T-cell (primary cell): ENCODE measurements at regions of chr9 and their contacts with region 1.

Region 1: GRCh38 chr9:5450359-5451091 is at the start of gene CD274:
- DNase-seq: peak; percentile 50 to 87 (median 68)
- ATAC-seq: peak; percentile 94 to 97 (median 95)
- H3K4me3 ChIP-seq: peak within 1 kb of the TSS; percentile 71 to 85
- H3K4me3 Mint-ChIP-seq: peak within 1 kb of the TSS; percentile 91 to 96 (median 93)
- H3K27ac ChIP-seq: peak within 1 kb of the TSS; percentile 98
- H3K27ac Mint-ChIP-seq: peak within 1 kb of the TSS; percentile 91 to 99
- H3K4me1 ChIP-seq: peaks cover 4 to 23% of the 10 kb centered on the region in 2 experiments
- H3K4me1 Mint-ChIP-seq: peaks cover 68 to 77% (median 68%) of the 10 kb centered on the region in 3 donors
- H3K27me3 ChIP-seq: no peaks in the 10 kb centered on the region
- H3K27me3 Mint-ChIP-seq: no peaks in the 10 kb centered on the region
- total RNA-seq, gene CD274: 6.6 to 11.4 (median 7.2) TPM

Region 2: DNA sequence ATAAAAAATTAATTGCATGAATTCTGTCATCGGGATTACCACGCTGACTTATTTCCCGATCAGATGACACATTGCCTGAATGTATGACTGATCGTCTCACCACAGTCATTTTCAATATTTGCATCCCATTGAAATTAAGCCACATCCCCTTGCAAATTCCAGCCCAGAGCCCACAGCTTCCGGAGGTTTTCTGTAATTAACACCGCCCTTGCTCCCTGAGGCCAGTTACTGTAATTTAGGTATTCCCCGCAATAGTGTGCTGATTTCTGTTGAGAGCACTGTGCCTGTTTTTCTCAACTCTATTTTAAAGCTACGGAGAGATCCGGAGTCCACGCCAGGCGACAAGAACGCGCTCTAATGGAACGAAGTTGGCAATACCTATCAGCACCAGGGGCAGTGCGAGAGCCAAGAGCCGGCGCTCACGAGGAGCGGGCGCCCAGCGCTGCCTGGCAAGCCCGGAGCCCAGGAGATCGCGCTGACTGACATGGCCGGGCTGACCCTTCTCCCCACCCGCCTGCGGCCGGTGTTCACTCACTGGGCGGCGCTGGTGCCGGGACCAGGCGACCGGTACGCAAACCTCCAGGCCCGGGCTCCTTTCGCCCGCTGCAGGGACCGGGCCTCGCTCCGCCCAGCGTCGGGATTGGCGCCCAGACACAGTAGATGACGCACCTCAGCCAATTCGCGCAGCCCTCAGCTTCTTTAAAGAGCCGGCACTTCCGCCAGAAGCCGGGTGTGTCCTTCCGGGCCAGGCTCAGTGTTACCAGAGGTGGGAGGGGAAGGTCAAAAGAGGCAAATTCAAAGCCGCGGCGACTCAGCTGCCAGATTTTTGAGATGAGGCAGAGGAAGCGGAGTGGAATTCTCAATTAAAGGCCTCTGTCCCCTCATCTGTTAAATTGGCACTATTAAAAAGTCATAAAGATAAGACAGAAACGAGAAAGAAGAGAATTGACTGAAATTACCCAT is 13.0 kb before region 1 on chr9 and contains the start of gene PLGRKT:
- CTCF ChIA-PET with region 1: interaction called, 10 to 47 read pairs
- POLR2A ChIA-PET with region 1: interaction called in 1 of 2 experiments, 13 read pairs
- DNase-seq: peak; percentile 76 to 94 (median 88)
- ATAC-seq: peak; percentile 95 to 99 (median 98)
- H3K4me3 ChIP-seq: peak within 1 kb of the TSS; percentile 77 to 84
- H3K4me3 Mint-ChIP-seq: peak within 1 kb of the TSS; percentile 89 to 95 (median 91)
- H3K27ac ChIP-seq: peak within 1 kb of the TSS; percentile 93
- H3K27ac Mint-ChIP-seq: peak within 1 kb of the TSS; percentile 98 to 99
- H3K4me1 ChIP-seq: peaks cover 15 to 22% of the 10 kb centered on the region in 2 experiments
- H3K4me1 Mint-ChIP-seq: peaks cover 28 to 37% (median 37%) of the 10 kb centered on the region in 3 donors
- H3K27me3 ChIP-seq: no peaks in the 10 kb centered on the region
- H3K27me3 Mint-ChIP-seq: no peaks in the 10 kb centered on the region
- total RNA-seq, gene PLGRKT: 15.4 to 21.3 (median 19.3) TPM

Region 3: DNA sequence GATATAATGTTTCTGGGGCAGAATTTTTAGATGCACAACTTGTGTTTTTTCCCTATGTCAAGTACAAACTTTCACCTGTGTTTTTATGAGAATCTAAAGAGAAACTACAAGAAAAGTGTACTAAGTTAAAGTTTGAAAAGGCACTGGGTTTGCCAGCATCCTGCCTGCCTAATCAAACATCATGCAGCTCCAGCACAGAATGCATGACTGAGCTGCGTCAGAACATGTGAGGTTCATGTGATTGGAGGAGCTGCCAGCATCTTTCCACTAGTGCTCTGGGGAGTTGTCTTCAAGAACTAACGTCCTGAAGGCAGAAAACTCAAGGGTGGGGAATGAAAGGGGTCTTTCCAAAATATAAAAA is 132.3 kb after region 1 on chr9:
- CTCF ChIA-PET with region 1: interaction called, 11 to 18 read pairs
- POLR2A ChIA-PET with region 1: interaction called in 1 of 2 experiments, 4 read pairs
- DNase-seq: peak in 32 of 35 experiments; percentile 10 to 75 (median 44)
- ATAC-seq: peak; percentile 73 to 89 (median 78)
- H3K4me3 ChIP-seq: no peak overlapping the region
- H3K4me3 Mint-ChIP-seq: peak overlapping the region in 1 of 3 donors; percentile 6
- H3K27ac ChIP-seq: peak overlapping the region; percentile 19
- H3K27ac Mint-ChIP-seq: peak overlapping the region; percentile 77 to 79
- H3K4me1 ChIP-seq: peaks cover 21 to 26% of the 10 kb centered on the region in 2 experiments
- H3K4me1 Mint-ChIP-seq: peaks cover 51 to 69% (median 66%) of the 10 kb centered on the region in 3 donors
- H3K27me3 ChIP-seq: no peaks in the 10 kb centered on the region
- H3K27me3 Mint-ChIP-seq: no peaks in the 10 kb centered on the region